ENCODE measurements at regions of chr2 and their contacts with region 1.

Region 1: GRCh38 chr2:168346725-168347477 is 99.5 kb upstream of the STK39 start:
- DNase-seq: peak; percentile 53
- H3K4me3 Mint-ChIP-seq: peak overlapping the region; percentile 81
- H3K27ac Mint-ChIP-seq: no peak overlapping the region
- H3K4me1 Mint-ChIP-seq: peaks cover 4% of the 10 kb centered on the region
- H3K27me3 Mint-ChIP-seq: peaks cover 19% of the 10 kb centered on the region

Region 2: GRCh38 chr2:168434146-168434545 is 87.2 kb after region 1 on chr2:
- intact Hi-C with region 1: no loop called
- DNase-seq: no peak
- H3K4me3 Mint-ChIP-seq: no peak overlapping the region
- H3K27ac Mint-ChIP-seq: no peak overlapping the region
- H3K4me1 Mint-ChIP-seq: peaks cover 35% of the 10 kb centered on the region
- H3K27me3 Mint-ChIP-seq: no peaks in the 10 kb centered on the region

Region 3: GRCh38 chr2:168687314-168687713 is 340.4 kb after region 1 on chr2:
- intact Hi-C with region 1: loop called (anchors 1 kb)
- DNase-seq: no peak
- H3K4me3 Mint-ChIP-seq: no peak overlapping the region
- H3K27ac Mint-ChIP-seq: no peak overlapping the region
- H3K4me1 Mint-ChIP-seq: peaks cover 18% of the 10 kb centered on the region
- H3K27me3 Mint-ChIP-seq: no peaks in the 10 kb centered on the region

Region 4: DNA sequence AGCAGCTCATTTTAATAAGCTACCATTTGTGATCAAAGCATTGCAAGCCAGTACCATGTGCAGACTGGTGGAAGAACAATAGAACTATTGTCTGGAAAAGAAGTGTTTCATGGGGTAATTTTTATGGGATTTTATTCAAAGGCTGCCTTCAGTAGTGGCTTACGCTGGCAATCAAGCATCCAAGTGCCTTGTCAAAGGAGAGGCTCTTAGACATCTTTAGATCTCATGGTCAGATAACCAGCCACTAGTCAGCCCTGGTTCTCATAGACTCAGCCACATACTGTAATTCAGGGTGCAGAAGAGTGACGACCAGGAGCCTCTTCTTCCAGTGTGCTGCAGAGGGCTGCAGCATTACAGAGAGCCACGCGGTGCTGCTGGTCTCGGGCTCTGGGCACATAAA is 357.0 kb after region 1 on chr2:
- intact Hi-C with region 1: loop called (anchors 1 kb)
- DNase-seq: no peak
- H3K4me3 Mint-ChIP-seq: no peak overlapping the region
- H3K27ac Mint-ChIP-seq: no peak overlapping the region
- H3K4me1 Mint-ChIP-seq: peaks cover 6% of the 10 kb centered on the region
- H3K27me3 Mint-ChIP-seq: no peaks in the 10 kb centered on the region

Region 5: DNA sequence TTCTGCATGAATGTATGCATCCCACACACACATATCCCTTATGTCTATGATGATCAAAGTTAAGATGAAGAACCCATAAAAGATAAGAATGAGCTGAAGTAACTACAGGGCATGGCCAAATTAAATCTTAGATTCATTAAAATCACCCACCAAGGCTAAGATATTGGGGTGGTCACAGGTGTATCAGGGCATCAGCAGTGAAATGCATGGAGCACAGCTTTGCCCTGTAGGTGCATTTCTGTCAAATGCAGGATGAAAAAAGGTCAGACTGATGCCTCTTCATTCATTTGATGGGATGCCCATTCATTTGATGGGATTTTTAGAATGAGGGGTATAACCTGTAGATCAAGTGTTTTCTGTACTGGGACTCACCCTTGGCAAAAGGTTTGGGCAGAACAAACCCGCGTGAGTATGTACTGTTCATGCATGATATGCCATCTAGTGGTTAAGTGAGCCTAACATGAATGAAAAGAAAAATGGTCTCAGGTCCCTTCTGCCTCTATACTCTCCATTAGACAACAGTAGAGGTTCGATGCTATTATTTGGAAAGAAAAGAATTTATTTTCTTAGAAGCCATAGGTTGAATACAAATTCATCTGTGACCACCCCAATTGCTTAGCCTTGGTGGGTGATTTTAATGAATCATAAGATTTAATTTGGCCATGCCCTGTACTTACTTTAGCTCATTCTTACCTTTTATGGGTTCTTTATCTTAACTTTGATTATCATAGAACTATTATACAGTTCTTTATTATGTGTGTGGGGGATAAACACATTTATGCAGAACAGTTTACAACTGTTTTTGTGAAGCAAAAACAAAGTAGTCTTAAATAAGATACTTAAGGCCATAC is 412.3 kb after region 1 on chr2:
- intact Hi-C with region 1: loop called (anchors 1 kb)
- DNase-seq: no peak
- H3K4me3 Mint-ChIP-seq: no peak overlapping the region
- H3K27ac Mint-ChIP-seq: no peak overlapping the region
- H3K4me1 Mint-ChIP-seq: peaks cover 10% of the 10 kb centered on the region
- H3K27me3 Mint-ChIP-seq: no peaks in the 10 kb centered on the region

Region 6: GRCh38 chr2:168920504-168921157 is 573.7 kb after region 1 on chr2:
- intact Hi-C with region 1: loop called (anchors 2 kb)
- DNase-seq: no peak
- H3K4me3 Mint-ChIP-seq: no peak overlapping the region
- H3K27ac Mint-ChIP-seq: no peak overlapping the region
- H3K4me1 Mint-ChIP-seq: peaks cover 10% of the 10 kb centered on the region
- H3K27me3 Mint-ChIP-seq: peaks cover 58% of the 10 kb centered on the region

Measured in activated T-helper 2 cell treated with anti-CD3 and anti-CD28 coated beads, Interferon-gamma antibody, Interleukin-2, Interleukin-4, amounts not matched to agents 10 μg/mL and 5 μg/mL and 100 μg/mL, durations not matched to agents 14 hours and 24 hours and 36 hours (primary cell).